SK-N-SH (cell line): ENCODE measurements at regions of chr1 and their contacts with region 1.

Region 1: DNA sequence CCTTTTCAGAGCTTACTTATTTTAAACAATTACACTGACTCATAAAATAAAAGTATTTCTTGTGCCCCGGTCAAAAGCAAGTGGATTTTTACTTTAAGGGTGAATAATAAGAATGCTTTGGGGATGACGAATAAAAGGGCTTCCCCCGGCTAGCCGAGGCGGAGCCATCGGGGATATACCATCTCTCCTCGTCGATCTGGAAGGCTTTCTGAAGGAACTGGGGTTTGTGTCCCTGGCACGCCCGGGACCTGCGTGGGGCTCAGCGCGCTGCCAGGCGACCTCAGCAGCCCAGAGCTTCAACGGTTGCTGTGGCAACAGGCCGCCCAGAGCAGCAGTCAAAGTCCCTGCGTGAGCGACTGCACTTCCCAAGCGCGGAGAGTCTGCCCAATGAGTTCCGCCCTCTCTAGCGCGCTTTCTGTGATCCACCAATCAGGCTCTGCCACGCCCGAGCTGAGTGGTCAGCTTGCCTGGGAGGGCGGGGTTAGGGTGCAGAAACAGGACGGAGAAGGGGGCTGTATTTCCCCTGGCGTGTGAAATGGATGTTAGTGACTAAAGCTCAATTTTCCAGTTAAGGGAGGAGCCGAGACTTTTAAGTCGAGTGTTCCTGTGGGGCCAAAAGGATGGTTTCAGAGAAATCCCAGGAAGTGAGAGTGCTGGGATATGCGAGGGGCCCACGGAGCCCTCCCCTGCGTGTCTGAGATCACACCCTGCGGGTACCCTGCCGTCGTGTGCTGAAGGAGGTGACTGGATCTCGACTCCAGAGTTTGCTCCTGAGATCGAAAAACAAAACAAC is 33.0 kb upstream of the MGST3 start:
- DNase-seq: peak; percentile 93
- H3K4me3 ChIP-seq: peak overlapping the region; percentile 68 to 80
- H3K27ac ChIP-seq: peak overlapping the region; percentile 84 to 85
- H3K4me1 ChIP-seq: peaks cover 5% of the 10 kb centered on the region in 2 experiments; a peak in 3 of 4 replicates
- H3K27me3 ChIP-seq: 0 out of 2 replicates have a peak, but pooled peaks cover 7% of the 10 kb centered on the region
- CTCF ChIP-seq: no peak
- EP300 ChIP-seq: peak in 1 of 2 experiments; percentile 12; a peak in 1 of 4 replicates
- RAD21 ChIP-seq: no peak

Region 2: DNA sequence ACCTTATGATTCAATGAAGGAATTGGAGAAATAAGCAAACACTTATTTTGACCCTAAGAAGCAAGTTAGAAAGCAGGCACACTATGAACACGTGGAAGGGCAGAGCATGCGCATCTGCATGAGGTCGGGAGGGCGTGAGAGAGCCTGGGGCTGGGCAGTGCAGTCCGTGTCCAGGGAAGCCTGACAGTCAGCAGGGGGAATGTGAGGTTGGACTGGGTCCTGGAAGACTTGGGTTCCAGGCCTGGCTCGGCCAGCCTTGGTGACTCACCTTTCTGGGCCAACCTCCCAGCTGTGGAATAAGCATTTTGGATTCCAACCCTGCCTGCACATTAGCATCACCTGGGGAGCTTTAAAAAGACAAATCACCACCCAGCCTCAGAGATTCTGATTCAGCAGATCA is 215.0 kb before region 1 on chr1:
- CTCF ChIA-PET with region 1: interaction called, 16 read pairs
- POLR2A ChIA-PET with region 1: no interaction called
- DNase-seq: no peak
- H3K4me3 ChIP-seq: no peak overlapping the region
- H3K27ac ChIP-seq: no peak overlapping the region
- H3K4me1 ChIP-seq: no peaks in the 10 kb centered on the region
- H3K27me3 ChIP-seq: peaks cover 27% of the 10 kb centered on the region
- CTCF ChIP-seq: no peak
- EP300 ChIP-seq: no peak
- RAD21 ChIP-seq: no peak

Region 3: DNA sequence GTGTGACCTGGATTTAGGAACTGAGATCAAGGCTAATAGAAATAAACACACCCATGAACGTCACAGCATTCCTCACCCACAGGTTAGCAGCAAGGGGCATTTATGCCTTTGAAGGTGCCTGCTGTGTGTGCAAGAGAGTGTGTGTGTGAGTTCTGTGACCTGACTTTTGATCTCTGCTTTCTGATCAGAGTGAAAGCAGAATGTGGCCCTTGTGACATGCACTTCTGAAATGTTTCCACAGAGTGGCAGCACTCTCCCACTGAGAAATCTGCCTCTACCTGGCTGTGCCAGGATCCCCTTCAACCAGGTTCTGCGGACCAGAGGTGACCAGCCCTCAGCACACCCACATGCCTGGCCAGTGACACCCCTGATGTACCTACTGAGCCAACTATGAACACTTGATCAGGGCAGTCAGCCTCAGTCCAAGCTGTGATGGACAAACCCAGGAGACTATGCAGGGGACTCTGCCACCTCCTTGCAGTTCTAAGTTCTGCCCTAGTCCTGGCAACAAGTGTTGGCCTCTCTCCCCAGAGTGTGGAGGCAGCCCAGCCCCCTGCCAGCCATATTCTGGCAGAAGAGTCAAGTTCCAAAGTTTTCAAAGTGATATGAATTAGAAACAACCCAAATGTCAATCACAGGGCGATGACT is 194.1 kb before region 1 on chr1:
- CTCF ChIA-PET with region 1: interaction called, 277 read pairs
- POLR2A ChIA-PET with region 1: no interaction called
- DNase-seq: peak; percentile 55
- H3K4me3 ChIP-seq: no peak overlapping the region; a peak in 1 of 4 replicates
- H3K27ac ChIP-seq: no peak overlapping the region
- H3K4me1 ChIP-seq: no peaks in the 10 kb centered on the region
- H3K27me3 ChIP-seq: no peaks in the 10 kb centered on the region
- CTCF ChIP-seq: peak; percentile 58
- EP300 ChIP-seq: no peak
- RAD21 ChIP-seq: peak; percentile 76

Region 4: GRCh38 chr1:165565751-165566490 is 32.2 kb before region 1 on chr1:
- CTCF ChIA-PET with region 1: interaction called, 12 read pairs
- POLR2A ChIA-PET with region 1: no interaction called
- DNase-seq: no peak
- H3K4me3 ChIP-seq: no peak overlapping the region
- H3K27ac ChIP-seq: no peak overlapping the region
- H3K4me1 ChIP-seq: no peaks in the 10 kb centered on the region
- H3K27me3 ChIP-seq: no peaks in the 10 kb centered on the region; the same call in 1 of the 2 replicates
- CTCF ChIP-seq: no peak
- EP300 ChIP-seq: no peak
- RAD21 ChIP-seq: no peak

Region 5: DNA sequence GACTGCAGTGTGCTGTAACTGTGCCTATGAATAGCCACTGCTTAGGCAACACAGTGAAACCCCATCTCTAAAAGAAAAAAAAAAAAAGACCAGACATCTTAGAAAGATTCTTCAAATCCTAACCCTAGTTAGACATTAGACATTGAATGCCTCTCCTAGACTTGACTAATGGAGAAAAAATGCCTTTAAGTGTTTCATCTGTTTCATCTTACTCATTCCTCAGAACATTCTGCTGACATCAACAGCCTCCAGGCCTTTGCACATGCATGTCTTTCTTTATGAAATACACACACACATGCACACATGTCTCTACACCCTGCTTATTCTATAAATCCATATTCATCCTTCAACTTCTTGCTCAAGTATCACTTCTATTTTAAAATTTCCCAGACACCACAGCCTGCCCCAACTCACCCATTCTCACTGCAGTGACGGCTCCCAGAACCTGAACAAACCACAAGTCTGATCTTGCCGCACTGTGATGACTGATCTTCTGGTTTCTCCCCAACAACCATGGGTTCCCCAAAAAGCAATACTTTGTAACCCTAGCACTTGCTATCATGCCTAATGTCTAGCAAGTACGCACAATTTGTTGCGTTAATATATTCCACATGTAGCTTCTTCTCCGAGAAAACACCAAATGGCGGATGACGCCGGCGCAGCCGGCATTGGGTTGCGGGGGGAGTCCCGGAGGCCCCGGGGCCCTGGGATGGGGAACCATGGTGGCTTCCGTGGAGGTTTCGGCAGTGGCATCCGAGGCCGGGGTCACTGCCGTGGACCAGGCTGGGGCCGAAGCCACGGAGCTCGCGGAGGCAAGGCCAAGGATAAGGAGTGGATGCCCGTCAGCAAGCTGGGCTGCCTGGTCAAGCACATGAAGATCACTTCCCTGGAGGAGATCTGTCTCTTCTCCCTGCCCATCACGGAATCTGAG is 16.9 kb before region 1 on chr1:
- CTCF ChIA-PET with region 1: interaction called, 29 read pairs
- POLR2A ChIA-PET with region 1: no interaction called
- DNase-seq: no peak
- H3K4me3 ChIP-seq: no peak overlapping the region
- H3K27ac ChIP-seq: no peak overlapping the region
- H3K4me1 ChIP-seq: no peaks in the 10 kb centered on the region
- H3K27me3 ChIP-seq: no peaks in the 10 kb centered on the region
- CTCF ChIP-seq: no peak
- EP300 ChIP-seq: no peak
- RAD21 ChIP-seq: no peak

Region 6: GRCh38 chr1:165637427-165637826 is 39.3 kb after region 1 on chr1:
- CTCF ChIA-PET with region 1: no interaction called
- POLR2A ChIA-PET with region 1: no interaction called
- DNase-seq: no peak
- H3K4me3 ChIP-seq: no peak overlapping the region
- H3K27ac ChIP-seq: no peak overlapping the region
- H3K4me1 ChIP-seq: peaks cover 12 to 19% of the 10 kb centered on the region in 2 experiments; a peak in 3 of 4 replicates
- H3K27me3 ChIP-seq: no peaks in the 10 kb centered on the region
- CTCF ChIP-seq: no peak
- EP300 ChIP-seq: no peak
- RAD21 ChIP-seq: no peak

Region 7: GRCh38 chr1:165928075-165928731 is 330.1 kb after region 1 on chr1:
- CTCF ChIA-PET with region 1: interaction called, 18 read pairs
- POLR2A ChIA-PET with region 1: interaction called, 3 read pairs
- DNase-seq: peak; percentile 62
- H3K4me3 ChIP-seq: peak overlapping the region in 1 of 2 experiments; percentile 14; a peak in 1 of 4 replicates
- H3K27ac ChIP-seq: no peak overlapping the region
- H3K4me1 ChIP-seq: no peaks in the 10 kb centered on the region
- H3K27me3 ChIP-seq: no peaks in the 10 kb centered on the region
- CTCF ChIP-seq: peak; percentile 79
- EP300 ChIP-seq: no peak
- RAD21 ChIP-seq: peak; percentile 82